B cell (primary cell): ENCODE measurements at regions of chr19 and their contacts with region 1.

Region 1: GRCh38 chr19:35140962-35141637 is 2.0 kb upstream of the FXYD7 start:
- DNase-seq: peak; percentile 87
- ATAC-seq: peak; percentile 86
- H3K4me3 ChIP-seq: peak overlapping the region in 4 of 5 experiments; percentile 43 to 58 (median 52)
- H3K4me3 Mint-ChIP-seq: peak overlapping the region; percentile 92
- H3K27ac ChIP-seq: no peak overlapping the region
- H3K27ac Mint-ChIP-seq: peak overlapping the region; percentile 88
- H3K4me1 ChIP-seq: peaks cover 25 to 52% of the 10 kb centered on the region in 2 donors
- H3K4me1 Mint-ChIP-seq: peaks cover 46% of the 10 kb centered on the region
- H3K27me3 ChIP-seq: peaks cover 0 to 13% (median 3%) of the 10 kb centered on the region in 4 experiments
- H3K27me3 Mint-ChIP-seq: peaks cover 14% of the 10 kb centered on the region
- CTCF ChIP-seq: peak; percentile 35

Region 2: DNA sequence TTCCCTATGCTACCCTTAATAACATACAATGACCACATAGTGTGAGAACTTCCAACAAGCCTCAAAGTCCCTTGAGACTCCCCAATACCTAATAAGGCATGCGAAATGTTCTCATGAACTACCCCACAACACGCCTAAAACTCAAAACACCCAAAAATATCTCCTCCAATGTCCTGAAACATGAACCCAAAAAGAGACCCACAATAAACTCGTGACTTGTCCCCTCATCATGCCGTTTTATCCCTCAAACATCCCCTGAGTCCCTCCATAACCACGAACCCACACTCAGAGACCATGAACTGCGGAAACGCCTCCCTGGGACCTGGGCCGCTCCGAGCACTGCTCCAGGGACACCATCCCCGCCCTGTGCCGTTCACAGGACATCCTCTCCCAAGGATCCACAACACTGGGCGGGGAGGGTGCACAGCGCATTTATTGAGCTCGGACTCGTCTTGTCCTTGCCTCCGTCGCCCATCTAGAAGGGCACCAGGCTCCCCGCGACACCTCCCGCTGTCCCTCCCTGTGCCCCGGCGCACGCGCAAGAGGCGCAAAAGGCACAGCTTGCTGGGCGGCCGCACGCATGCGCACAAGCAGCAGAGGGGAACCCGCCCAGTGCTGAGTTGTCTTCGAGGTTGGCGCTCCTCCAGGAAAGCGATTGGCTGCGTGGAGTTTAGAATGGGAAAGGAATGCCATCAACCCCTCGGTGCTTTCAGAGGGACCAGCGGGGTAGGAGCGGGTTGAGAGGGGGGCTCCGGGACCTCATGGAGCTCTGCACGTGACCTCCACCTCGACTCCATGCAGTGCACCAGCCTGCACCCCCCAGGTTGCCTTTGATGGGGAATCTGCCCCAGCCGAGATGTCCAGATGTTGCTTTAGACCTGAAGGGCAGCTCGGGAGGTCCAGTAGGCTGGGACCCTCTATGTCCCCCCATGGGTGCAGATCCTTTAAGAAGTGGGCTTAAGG is 16.7 kb before region 1 on chr19:
- CTCF ChIA-PET with region 1: interaction called, 11 read pairs
- POLR2A ChIA-PET with region 1: interaction called, 11 read pairs
- intact Hi-C with region 1: loop called (anchors 2 kb)
- DNase-seq: peak; percentile 87
- ATAC-seq: peak; percentile 92
- H3K4me3 ChIP-seq: peak overlapping the region; percentile 37 to 72 (median 59)
- H3K4me3 Mint-ChIP-seq: peak overlapping the region; percentile 96
- H3K27ac ChIP-seq: peak overlapping the region; percentile 22 to 34
- H3K27ac Mint-ChIP-seq: peak overlapping the region; percentile 95
- H3K4me1 ChIP-seq: peaks cover 10 to 17% of the 10 kb centered on the region in 2 donors
- H3K4me1 Mint-ChIP-seq: peaks cover 15% of the 10 kb centered on the region
- H3K27me3 ChIP-seq: no peaks in the 10 kb centered on the region
- H3K27me3 Mint-ChIP-seq: no peaks in the 10 kb centered on the region
- CTCF ChIP-seq: no peak

Region 3: GRCh38 chr19:35168207-35168606 is 27.1 kb after region 1 on chr19:
- CTCF ChIA-PET with region 1: interaction called, 10 read pairs
- POLR2A ChIA-PET with region 1: interaction called, 4 read pairs
- intact Hi-C with region 1: no loop called
- DNase-seq: no peak
- ATAC-seq: no peak
- H3K4me3 ChIP-seq: no peak overlapping the region
- H3K4me3 Mint-ChIP-seq: no peak overlapping the region
- H3K27ac ChIP-seq: peak overlapping the region; percentile 66 to 74
- H3K27ac Mint-ChIP-seq: peak overlapping the region; percentile 77
- H3K4me1 ChIP-seq: peaks cover 21 to 25% of the 10 kb centered on the region in 2 donors
- H3K4me1 Mint-ChIP-seq: peaks cover 35% of the 10 kb centered on the region
- H3K27me3 ChIP-seq: no peaks in the 10 kb centered on the region
- H3K27me3 Mint-ChIP-seq: no peaks in the 10 kb centered on the region
- CTCF ChIP-seq: no peak

Region 4: GRCh38 chr19:35269421-35270117 is 128.5 kb after region 1 on chr19:
- CTCF ChIA-PET with region 1: interaction called, 4 read pairs
- POLR2A ChIA-PET with region 1: interaction called, 4 read pairs
- intact Hi-C with region 1: loop called (anchors 1 kb)
- DNase-seq: peak; percentile 92
- ATAC-seq: peak; percentile 71
- H3K4me3 ChIP-seq: peak overlapping the region in 4 of 5 experiments; percentile 24 to 62 (median 54)
- H3K4me3 Mint-ChIP-seq: peak overlapping the region; percentile 84
- H3K27ac ChIP-seq: no peak overlapping the region
- H3K27ac Mint-ChIP-seq: peak overlapping the region; percentile 87
- H3K4me1 ChIP-seq: peaks cover 39 to 57% of the 10 kb centered on the region in 2 donors
- H3K4me1 Mint-ChIP-seq: peaks cover 62% of the 10 kb centered on the region
- H3K27me3 ChIP-seq: no peaks in the 10 kb centered on the region
- H3K27me3 Mint-ChIP-seq: no peaks in the 10 kb centered on the region
- CTCF ChIP-seq: peak; percentile 77

Region 5: DNA sequence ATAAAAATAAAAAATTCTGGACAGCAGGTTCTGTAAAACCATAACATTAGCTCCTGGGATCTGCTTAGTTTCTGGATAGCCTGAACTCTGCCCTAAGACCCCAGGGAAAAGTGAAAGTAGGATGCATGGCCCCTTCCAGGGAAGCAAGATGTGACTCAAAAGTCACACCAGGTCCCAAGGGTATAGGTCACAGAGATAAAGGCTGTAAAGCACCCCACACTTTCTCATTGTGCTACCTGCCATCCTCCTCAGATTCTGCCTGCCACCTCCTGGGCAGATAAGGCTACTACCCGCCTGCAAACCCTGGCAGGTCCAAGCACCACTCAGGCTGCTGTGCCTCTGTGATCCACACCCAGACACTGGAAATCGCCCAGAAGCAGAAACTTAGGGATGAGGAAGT is 327.5 kb after region 1 on chr19:
- CTCF ChIA-PET with region 1: interaction called, 10 read pairs
- POLR2A ChIA-PET with region 1: no interaction called
- intact Hi-C with region 1: no loop called
- DNase-seq: peak; percentile 84
- ATAC-seq: peak; percentile 100
- H3K4me3 ChIP-seq: no peak overlapping the region
- H3K4me3 Mint-ChIP-seq: no peak overlapping the region
- H3K27ac ChIP-seq: no peak overlapping the region
- H3K27ac Mint-ChIP-seq: peak overlapping the region; percentile 23
- H3K4me1 ChIP-seq: peaks cover 2 to 12% of the 10 kb centered on the region in 2 donors
- H3K4me1 Mint-ChIP-seq: peaks cover 10% of the 10 kb centered on the region
- H3K27me3 ChIP-seq: no peaks in the 10 kb centered on the region
- H3K27me3 Mint-ChIP-seq: no peaks in the 10 kb centered on the region
- CTCF ChIP-seq: peak; percentile 84